Left cardiac atrium (tissue), 4 donors: ENCODE measurements at regions of chr11 and their contacts with region 1.

Region 1: DNA sequence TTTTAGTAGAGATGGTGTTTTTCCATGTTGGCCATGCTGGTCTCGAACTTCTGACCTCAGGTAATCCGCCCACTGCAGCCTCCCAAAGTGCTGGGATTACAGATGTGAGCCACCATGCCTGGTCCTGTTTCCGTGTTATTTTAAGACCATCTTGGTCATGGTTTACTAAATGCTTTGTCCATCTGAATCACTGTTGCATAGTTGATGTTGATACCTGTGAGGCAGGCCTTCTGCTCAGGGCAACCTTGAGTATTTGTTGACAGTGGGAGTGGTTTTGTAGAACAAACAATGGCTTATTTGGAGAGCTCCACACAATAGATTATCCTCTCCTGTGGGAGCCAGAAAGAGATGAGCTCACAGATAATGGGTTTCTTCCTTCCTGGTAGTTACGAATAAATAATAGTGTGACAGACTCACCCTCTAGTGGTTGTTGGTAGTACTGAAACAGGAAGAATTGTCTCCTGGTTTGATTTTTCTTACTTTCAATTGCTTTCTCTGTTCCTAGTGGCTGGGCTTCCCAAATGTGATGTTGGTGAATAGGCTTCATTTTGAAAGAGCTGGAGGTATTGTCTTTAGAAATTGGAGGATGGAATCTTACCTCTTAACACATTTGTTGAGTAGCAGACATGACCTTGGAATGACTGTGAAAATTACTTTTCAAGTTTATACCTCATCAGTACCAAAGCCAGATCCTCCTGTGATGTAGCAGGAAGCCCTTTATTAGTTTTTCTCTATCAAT is 39.0 kb downstream of the CTNND1 start:
- DNase-seq: no peak
- ATAC-seq: peak; percentile 69 to 73

Region 2: GRCh38 chr11:57205041-57205671 is 595.5 kb before region 1 on chr11:
- intact Hi-C with region 1: no loop called
- DNase-seq: peak; percentile 41
- ATAC-seq: peak; percentile 32 to 48

Region 3: GRCh38 chr11:57667736-57668435 is 132.7 kb before region 1 on chr11 and contains the start of gene ZDHHC5:
- intact Hi-C with region 1: loop called in 1 of 2 experiments (anchors 5 kb)
- DNase-seq: peak; percentile 100
- ATAC-seq: peak; percentile 95 to 96
- total RNA-seq, gene ZDHHC5: 51.3 to 60.7 TPM

Region 4: DNA sequence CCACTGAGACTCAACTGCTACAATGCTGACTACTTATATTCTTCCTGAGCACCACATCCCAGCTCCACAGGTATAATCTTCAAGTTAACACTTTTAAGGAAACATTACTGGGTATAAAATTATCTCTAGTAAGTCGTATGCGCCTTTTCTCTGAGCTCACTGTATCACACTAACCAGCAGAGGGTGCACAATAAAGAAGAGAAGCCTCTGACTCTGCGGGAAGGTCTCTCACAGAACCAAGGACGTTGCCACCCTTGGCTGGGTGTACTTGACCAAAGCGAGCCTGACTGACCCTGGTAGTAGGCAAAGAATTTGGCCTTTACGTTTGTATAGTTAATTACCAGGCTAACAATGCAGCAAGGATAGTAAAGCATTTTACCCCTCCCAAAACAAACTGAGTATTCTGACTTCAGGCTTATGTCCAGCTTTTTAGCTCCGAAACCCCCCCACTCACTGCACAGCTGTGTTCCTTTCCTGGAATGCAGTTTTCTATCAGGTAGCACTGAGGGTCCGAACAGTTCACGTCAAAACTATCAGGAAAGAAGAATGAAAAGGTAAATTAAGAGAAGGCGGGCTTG is 48.8 kb before region 1 on chr11 and contains the start of gene BTBD18:
- intact Hi-C with region 1: loop called (anchors 2 to 10 kb)
- DNase-seq: peak; percentile 39
- ATAC-seq: peak; percentile 82 to 83
- total RNA-seq, gene BTBD18: not detected

Region 5: GRCh38 chr11:57763568-57763967 is 37.0 kb before region 1 on chr11:
- intact Hi-C with region 1: no loop called
- DNase-seq: no peak
- ATAC-seq: peak; percentile 25 to 51

Region 6: DNA sequence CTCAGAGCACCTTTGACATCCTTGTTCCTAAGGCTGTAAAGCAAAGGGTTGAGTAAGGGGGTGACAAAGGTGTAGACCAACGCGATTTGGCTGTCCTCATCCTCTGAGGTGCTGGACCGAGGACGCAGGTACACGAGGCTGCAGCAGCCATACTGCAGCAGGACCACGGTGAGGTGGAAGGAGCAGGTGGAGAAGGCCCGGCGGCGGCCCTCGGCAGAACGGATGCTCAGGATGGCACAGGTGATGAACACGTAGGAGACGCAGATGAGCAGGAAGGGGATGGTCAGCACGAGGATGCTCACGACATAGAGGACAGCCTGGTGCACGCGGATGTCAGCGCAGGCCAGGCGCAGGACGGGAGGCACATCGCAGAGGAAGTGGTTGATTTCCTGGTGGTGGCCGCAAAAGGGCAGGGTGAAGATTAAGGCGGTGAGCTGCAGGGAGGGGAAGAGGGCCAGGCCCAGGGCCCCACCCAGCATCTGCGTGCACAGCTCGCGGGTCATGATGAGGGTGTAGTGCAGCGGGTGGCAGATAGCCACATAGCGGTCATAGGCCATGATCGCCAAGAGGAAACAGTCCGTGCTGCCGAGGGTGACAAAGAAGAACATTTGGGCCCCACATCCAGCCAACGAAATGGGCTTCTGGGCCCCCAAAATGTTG is 427.5 kb after region 1 on chr11:
- intact Hi-C with region 1: no loop called
- DNase-seq: no peak
- ATAC-seq: no peak